Ovary (tissue), 10 donors: ENCODE measurements at regions of chr10 and their contacts with region 1.

Region 1: DNA sequence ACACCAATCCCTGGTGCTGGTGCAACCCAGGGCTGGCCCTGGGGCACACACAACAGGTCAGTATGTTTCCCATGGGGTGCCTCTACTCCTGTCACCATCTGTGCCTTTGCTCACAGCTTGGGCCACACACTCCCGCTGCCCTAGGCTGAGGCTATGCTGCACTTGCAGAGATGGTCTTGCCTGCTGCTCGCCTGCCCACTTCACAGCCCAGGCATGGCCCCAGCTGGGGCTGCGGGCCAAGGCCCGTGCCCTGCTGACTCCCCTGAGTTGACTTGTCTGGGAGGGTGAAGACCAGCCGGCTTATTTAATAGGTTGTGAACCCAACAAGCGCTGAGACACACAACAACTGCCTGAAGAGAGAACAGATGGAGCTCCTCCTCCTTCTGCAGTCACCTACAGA is 184.1 kb downstream of the ZNF33B start:
- DNase-seq: no peak
- H3K4me3 ChIP-seq: no peak overlapping the region
- H3K27ac ChIP-seq: no peak overlapping the region
- H3K4me1 ChIP-seq: no peaks in the 10 kb centered on the region
- H3K27me3 ChIP-seq: no peaks in the 10 kb centered on the region
- CTCF ChIP-seq: no peak
- EP300 ChIP-seq: no peak
- POLR2A ChIP-seq: no peak

Region 2: DNA sequence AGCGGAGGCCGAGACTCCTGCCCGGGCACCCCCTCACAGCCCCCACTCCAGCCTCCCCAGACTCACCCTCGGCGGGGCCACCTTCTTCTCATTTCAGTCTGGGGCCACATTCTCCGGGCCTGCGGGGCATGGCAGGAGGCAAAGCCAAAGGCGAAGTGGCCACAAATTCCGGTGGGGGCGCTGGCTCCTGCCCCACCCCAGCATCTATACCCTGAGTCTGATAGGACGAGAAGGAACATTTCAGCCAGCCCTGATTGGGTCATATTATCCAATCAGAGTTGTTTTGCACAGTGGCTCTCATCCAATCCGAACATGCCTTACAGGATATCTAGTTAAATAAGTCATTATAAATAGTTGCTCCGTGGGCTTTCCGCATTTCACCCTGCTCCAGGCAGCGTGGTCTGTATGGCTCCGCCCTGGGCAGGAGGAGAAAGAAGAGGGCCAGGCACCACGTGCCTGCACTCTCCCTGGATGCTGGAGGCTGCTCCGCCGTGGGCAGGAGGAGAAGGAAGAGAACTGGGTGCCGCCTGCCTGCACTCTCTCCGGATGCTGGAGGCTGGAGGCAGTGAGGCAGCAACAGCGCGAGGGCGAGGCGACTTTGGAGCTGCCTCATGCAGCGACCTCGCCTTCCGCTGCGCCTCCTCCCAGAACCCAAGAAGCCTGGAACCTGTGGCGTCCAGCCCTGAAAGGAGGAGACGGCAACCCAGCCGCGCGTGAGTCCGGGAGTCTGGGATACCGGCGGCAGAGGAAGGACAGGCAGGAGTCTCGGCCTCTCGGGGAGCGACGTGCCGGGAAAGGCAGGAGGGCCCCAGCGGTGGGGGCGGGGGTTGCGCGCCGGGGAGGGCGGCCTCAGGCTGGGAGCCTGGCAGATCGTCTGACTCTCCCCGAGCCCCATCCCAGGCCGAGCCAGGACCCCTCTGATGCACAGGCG is 21.1 kb after region 1 on chr10:
- intact Hi-C with region 1: loop called in 1 of 4 experiments (anchors 2 kb)
- DNase-seq: no peak
- H3K4me3 ChIP-seq: peak overlapping the region; percentile 22
- H3K27ac ChIP-seq: no peak overlapping the region
- H3K4me1 ChIP-seq: no peaks in the 10 kb centered on the region
- H3K27me3 ChIP-seq: no peaks in the 10 kb centered on the region
- CTCF ChIP-seq: no peak
- EP300 ChIP-seq: no peak
- POLR2A ChIP-seq: no peak